ENCODE measurements at regions of chr5 and their contacts with region 1.

Region 1: DNA sequence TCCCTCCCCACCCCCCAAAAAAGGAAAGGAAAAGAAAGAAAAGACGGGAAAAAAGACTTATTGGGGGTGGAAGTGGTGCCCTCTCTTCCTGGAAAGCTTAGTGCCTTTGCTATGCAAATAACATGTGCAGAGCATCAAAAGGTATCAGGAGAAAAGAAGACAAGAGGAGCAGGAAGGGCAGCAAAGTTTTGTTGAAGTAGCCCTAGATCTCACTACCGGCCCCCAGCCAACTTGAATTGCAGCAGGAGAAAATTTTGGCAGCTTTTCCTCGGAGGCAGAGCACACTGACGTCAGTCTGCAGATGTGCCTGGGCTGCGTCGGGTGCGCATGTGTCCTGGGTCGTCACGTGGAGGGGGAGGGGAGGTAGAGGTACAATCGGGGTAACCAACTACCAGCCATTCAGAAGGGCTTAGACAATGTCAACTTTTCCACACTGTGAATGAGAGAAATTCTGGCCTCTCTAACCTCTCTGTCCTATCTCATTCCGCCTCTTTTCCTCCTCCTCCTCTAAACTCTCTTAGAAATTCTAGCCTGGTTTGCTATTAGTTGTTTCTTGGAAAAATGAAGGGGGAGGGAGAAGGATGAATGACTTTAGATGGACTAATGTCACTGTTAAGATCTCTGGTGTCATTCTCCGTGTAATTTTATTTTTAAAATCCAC is at the start of gene ADAMTS6:
- DNase-seq: peak; percentile 71 to 93 (median 79)
- ATAC-seq: peak; percentile 89
- H3K4me3 ChIP-seq: peak within 1 kb of the TSS; percentile 50
- H3K27ac ChIP-seq: peak within 1 kb of the TSS; percentile 89
- H3K4me1 ChIP-seq: peaks cover 0 to 11% of the 10 kb centered on the region in 2 experiments; a peak in 1 of 5 replicates
- H3K27me3 ChIP-seq: no peaks in the 10 kb centered on the region
- CTCF ChIP-seq: no peak
- EP300 ChIP-seq: no peak; the same call in 1 of the 2 replicates
- POLR2A ChIP-seq: 0 out of 2 replicates have a peak, but pooled peaks have one; percentile 59
- RAD21 ChIP-seq: 0 out of 4 replicates have a peak, but pooled peaks of 1 of the 2 experiments have one; percentile 12
- polyA plus RNA-seq, gene ADAMTS6: 0.57 to 0.59 TPM

Region 2: GRCh38 chr5:64811050-64811640 is 670.6 kb before region 1 on chr5:
- CTCF ChIA-PET with region 1: interaction called, 16 read pairs
- POLR2A ChIA-PET with region 1: interaction called, 4 read pairs
- in situ Hi-C with region 1: loop called (anchors 10 kb)
- intact Hi-C with region 1: loop called (anchors 1 kb)
- DNase-seq: peak; percentile 19 to 56 (median 36)
- ATAC-seq: peak; percentile 77
- H3K4me3 ChIP-seq: no peak overlapping the region
- H3K27ac ChIP-seq: no peak overlapping the region
- H3K4me1 ChIP-seq: no peaks in the 10 kb centered on the region
- H3K27me3 ChIP-seq: no peaks in the 10 kb centered on the region
- CTCF ChIP-seq: peak; percentile 37 to 81 (median 48); a peak in 5 of 6 replicates
- EP300 ChIP-seq: no peak
- POLR2A ChIP-seq: no peak
- RAD21 ChIP-seq: peak; percentile 83 to 85

Region 3: GRCh38 chr5:65035211-65036206 is 446.3 kb before region 1 on chr5:
- CTCF ChIA-PET with region 1: no interaction called
- POLR2A ChIA-PET with region 1: no interaction called
- in situ Hi-C with region 1: no loop called
- intact Hi-C with region 1: loop called (anchors 5 kb)
- DNase-seq: peak; percentile 94 to 98 (median 96)
- ATAC-seq: peak; percentile 95
- H3K4me3 ChIP-seq: peak overlapping the region; percentile 45
- H3K27ac ChIP-seq: peak overlapping the region; percentile 94
- H3K4me1 ChIP-seq: peaks cover 14 to 24% of the 10 kb centered on the region in 2 experiments
- H3K27me3 ChIP-seq: no peaks in the 10 kb centered on the region
- CTCF ChIP-seq: 0 out of 6 replicates have a peak, but pooled peaks of 1 of the 3 experiments have one; percentile 4
- EP300 ChIP-seq: peak; percentile 53
- POLR2A ChIP-seq: peak; percentile 80
- RAD21 ChIP-seq: no peak

Region 4: GRCh38 chr5:65100911-65101631 is 380.7 kb before region 1 on chr5:
- CTCF ChIA-PET with region 1: no interaction called
- POLR2A ChIA-PET with region 1: interaction called, 4 read pairs
- in situ Hi-C with region 1: no loop called
- intact Hi-C with region 1: loop called (anchors 1 kb)
- DNase-seq: peak; percentile 33 to 69 (median 52)
- ATAC-seq: peak; percentile 94
- H3K4me3 ChIP-seq: no peak overlapping the region
- H3K27ac ChIP-seq: no peak overlapping the region
- H3K4me1 ChIP-seq: peaks cover 9% of the 10 kb centered on the region in 2 experiments; a peak in 4 of 5 replicates
- H3K27me3 ChIP-seq: 0 out of 5 replicates have a peak, but pooled peaks cover 0 to 4% of the 10 kb centered on the region in 2 experiments
- CTCF ChIP-seq: peak; percentile 64 to 84 (median 69)
- EP300 ChIP-seq: peak; percentile 58; the same call in 1 of the 2 replicates
- POLR2A ChIP-seq: no peak
- RAD21 ChIP-seq: peak; percentile 68 to 83

Region 5: DNA sequence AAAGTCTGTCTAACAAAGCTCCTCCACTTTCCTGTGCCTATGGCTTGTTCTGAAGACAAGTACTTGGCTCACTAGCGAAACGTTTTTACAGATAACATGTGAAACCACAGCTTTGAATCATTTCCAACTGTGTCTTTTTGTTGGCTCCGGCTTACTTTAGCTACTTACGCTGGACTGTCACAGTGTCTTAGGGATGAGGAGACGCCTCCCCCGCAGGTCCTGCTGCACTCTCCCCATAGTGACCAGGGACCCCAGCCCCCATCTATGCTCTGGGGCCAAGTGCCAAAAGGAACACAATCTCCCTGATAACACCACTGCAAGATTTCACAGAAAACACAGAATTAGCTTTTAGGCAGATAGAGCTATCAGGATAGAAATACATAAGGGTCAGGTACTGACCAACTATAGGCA is 219.1 kb before region 1 on chr5:
- CTCF ChIA-PET with region 1: no interaction called
- POLR2A ChIA-PET with region 1: no interaction called
- in situ Hi-C with region 1: no loop called
- intact Hi-C with region 1: loop called (anchors 10 kb)
- DNase-seq: peak in 2 of 4 experiments; percentile 16 to 55
- ATAC-seq: peak; percentile 78
- H3K4me3 ChIP-seq: no peak overlapping the region
- H3K27ac ChIP-seq: no peak overlapping the region
- H3K4me1 ChIP-seq: peaks cover 0 to 3% of the 10 kb centered on the region in 2 experiments; a peak in 3 of 5 replicates
- H3K27me3 ChIP-seq: no peaks in the 10 kb centered on the region
- CTCF ChIP-seq: no peak
- EP300 ChIP-seq: no peak
- POLR2A ChIP-seq: no peak
- RAD21 ChIP-seq: no peak

Region 6: GRCh38 chr5:65434122-65434521 is 47.6 kb before region 1 on chr5:
- CTCF ChIA-PET with region 1: no interaction called
- POLR2A ChIA-PET with region 1: no interaction called
- in situ Hi-C with region 1: no loop called
- intact Hi-C with region 1: no loop called
- DNase-seq: no peak
- ATAC-seq: no peak
- H3K4me3 ChIP-seq: no peak overlapping the region
- H3K27ac ChIP-seq: no peak overlapping the region
- H3K4me1 ChIP-seq: no peaks in the 10 kb centered on the region
- H3K27me3 ChIP-seq: no peaks in the 10 kb centered on the region
- CTCF ChIP-seq: no peak
- EP300 ChIP-seq: no peak
- POLR2A ChIP-seq: no peak
- RAD21 ChIP-seq: no peak

Region 7: GRCh38 chr5:65562731-65563701 is 81.3 kb after region 1 on chr5 and contains the starts of genes CENPK and PPWD1:
- CTCF ChIA-PET with region 1: no interaction called
- POLR2A ChIA-PET with region 1: interaction called, 3 read pairs
- in situ Hi-C with region 1: no loop called
- intact Hi-C with region 1: loop called (anchors 5 kb)
- DNase-seq: peak; percentile 92 to 97 (median 94)
- ATAC-seq: peak; percentile 99
- H3K4me3 ChIP-seq: peak within 1 kb of the TSS; percentile 78
- H3K27ac ChIP-seq: peak within 1 kb of the TSS; percentile 96
- H3K4me1 ChIP-seq: no peaks in the 10 kb centered on the region; a peak in 1 of 5 replicates
- H3K27me3 ChIP-seq: no peaks in the 10 kb centered on the region
- CTCF ChIP-seq: no peak; a peak in 1 of 6 replicates
- EP300 ChIP-seq: peak; percentile 25; the same call in 1 of the 2 replicates
- POLR2A ChIP-seq: peak; percentile 94
- RAD21 ChIP-seq: no peak
- polyA plus RNA-seq, gene CENPK: 121 to 134 TPM
- polyA plus RNA-seq, gene PPWD1: 46.3 to 89.2 TPM